Motor neuron (in vitro differentiated cells): ENCODE measurements at regions of chr13 and their contacts with region 1.

Region 1: DNA sequence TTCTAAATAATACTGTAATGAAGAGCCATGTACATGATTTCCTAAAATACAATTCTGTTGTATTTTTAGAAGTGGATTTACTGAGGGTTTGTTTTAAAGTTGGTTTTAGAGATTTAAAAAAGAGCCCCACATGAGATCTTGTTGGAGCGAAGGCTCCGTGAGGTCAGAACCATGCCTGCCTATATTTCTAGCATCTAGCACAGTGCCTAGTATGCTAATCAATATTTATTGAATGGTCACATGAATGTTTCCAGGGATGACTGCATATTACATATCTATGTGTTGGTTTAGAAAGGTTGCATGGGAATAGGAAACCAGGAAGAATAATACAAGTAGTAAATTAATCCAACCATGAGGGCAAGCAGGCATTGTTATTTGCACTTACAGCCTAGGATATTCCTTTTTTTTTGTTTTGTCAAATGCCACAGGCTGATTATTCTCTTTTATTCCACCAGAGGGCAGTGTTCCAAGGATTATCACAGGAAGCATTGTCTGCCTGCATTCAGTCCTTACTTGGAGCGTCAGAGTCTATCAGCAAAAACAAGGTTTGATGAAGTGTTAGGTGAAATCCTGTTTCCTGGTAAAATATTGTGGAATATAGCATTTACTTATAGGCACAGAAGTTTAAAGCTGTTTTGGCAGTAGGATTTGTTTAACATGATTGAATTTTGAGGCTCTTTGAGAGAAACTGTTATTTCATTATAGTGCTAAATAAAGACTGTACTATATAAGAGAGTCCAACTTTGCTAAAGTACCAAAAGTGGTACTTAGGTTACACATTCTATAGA is 46.8 kb downstream of the COG3 start:
- ATAC-seq: peak; percentile 46 to 78 (median 66)
- H3K4me3 ChIP-seq: no peak overlapping the region
- H3K27ac ChIP-seq: no peak overlapping the region
- H3K4me1 ChIP-seq: no peaks in the 10 kb centered on the region

Region 2: GRCh38 chr13:45615501-45616101 is 104.1 kb after region 1 on chr13 and contains the start of gene ERICH6B:
- in situ Hi-C with region 1: no loop called
- ATAC-seq: peak in 7 of 8 experiments; percentile 87 to 99 (median 98)
- H3K4me3 ChIP-seq: peak within 1 kb of the TSS; percentile 4 to 27 (median 12)
- H3K27ac ChIP-seq: peak within 1 kb of the TSS; percentile 70 to 78
- H3K4me1 ChIP-seq: peaks cover 18 to 23% of the 10 kb centered on the region in 2 donors
- total RNA-seq, gene ERICH6B: 0.56 to 2.5 (median 0.92) TPM in 7 of 8 experiments, not detected in the other

Region 3: DNA sequence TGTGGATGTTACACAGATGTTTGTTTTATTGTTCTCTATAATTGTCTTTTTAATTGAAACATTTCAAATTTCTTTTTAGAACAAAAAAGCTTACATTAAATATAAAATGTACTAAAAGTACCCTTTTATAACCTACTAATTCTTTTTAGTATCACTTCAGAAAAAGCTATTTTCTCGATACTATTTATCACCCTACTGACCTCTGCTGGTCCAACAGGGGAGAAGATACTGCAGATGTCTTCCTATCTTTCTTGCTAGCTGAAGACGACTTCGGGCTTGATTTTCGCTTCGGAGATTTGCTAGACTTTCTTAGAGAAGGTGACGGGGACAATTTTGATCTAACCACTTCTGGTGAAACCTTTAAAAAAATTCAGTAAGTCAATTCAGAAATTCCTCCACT is 498.6 kb after region 1 on chr13:
- in situ Hi-C with region 1: loop called in 1 of 9 experiments (anchors 25 kb)
- ATAC-seq: no peak
- H3K4me3 ChIP-seq: no peak overlapping the region
- H3K27ac ChIP-seq: no peak overlapping the region
- H3K4me1 ChIP-seq: no peaks in the 10 kb centered on the region